PC-3 (cell line): ENCODE measurements at regions of chr6 and their contacts with region 1.

Region 1: DNA sequence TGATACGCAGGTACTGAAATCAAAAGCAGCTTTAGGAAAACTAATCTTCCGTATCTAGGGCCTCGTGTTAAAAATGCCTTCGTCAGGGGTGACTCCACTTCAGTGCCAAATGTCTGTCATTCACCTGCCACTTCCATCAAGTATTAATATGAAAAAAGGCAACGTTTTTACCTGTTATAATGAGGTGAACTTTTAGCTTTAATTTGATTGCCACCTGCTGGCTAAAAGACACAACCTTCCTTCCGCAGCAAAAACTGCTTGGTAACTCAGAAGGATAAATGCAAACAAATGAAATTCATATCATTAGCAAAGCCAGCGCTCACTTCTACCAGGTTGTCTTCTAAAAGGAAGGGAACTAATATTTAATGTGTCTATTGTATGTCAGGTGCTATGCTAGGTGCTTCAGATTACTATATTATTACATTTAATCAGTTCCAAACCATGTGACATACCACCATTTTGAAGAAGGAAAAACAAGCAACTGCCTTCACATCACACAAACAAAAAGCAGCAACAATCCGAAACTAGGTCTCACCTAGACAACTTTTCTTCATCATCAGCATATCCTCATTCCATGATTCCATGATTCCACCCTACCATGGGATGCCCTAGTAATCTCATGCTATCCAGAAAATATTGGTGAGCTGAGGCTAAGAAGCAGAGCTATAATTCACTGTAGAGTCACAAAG is 20.6 kb upstream of the ARHGAP18 start:
- DNase-seq: peak; percentile 61
- ATAC-seq: peak; percentile 45; the same call in 1 of the 2 replicates
- H3K4me3 ChIP-seq: no peak overlapping the region
- H3K27ac ChIP-seq: no peak overlapping the region
- H3K4me1 ChIP-seq: peaks cover 4% of the 10 kb centered on the region; the same call in 1 of the 2 replicates
- H3K27me3 ChIP-seq: no peaks in the 10 kb centered on the region
- CTCF ChIP-seq: peak; percentile 77

Region 2: DNA sequence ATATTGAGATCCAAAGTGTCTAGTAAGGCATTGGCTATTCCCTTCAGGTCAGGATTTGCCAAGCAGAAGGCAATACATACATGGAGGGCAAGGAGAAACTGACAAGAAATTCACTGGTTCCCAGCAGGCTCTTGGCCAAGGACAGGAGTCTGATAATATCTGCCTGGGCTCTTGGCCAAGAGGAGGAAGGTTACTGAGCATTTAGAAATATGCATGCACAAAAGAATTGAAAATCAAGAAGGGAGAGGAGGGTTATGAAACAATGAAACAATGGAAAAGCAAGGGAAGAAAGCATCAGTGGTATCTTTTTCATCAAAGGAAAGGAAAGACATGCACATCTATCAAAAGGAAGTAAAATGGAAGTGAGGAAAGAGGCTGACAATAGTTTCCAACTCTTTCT is 63.0 kb before region 1 on chr6:
- CTCF ChIA-PET with region 1: no interaction called
- POLR2A ChIA-PET with region 1: no interaction called
- intact Hi-C with region 1: loop called (anchors 1 kb)
- DNase-seq: peak; percentile 57
- ATAC-seq: no peak; the same call in 1 of the 2 replicates
- H3K4me3 ChIP-seq: no peak overlapping the region
- H3K27ac ChIP-seq: no peak overlapping the region
- H3K4me1 ChIP-seq: peaks cover 20% of the 10 kb centered on the region
- H3K27me3 ChIP-seq: no peaks in the 10 kb centered on the region
- CTCF ChIP-seq: no peak